Activated CD4-positive, alpha-beta T cell treated with anti-CD3 and anti-CD28 coated beads for 36 hours (primary cell): ENCODE measurements at regions of chrX and their contacts with region 1.

Region 1: DNA sequence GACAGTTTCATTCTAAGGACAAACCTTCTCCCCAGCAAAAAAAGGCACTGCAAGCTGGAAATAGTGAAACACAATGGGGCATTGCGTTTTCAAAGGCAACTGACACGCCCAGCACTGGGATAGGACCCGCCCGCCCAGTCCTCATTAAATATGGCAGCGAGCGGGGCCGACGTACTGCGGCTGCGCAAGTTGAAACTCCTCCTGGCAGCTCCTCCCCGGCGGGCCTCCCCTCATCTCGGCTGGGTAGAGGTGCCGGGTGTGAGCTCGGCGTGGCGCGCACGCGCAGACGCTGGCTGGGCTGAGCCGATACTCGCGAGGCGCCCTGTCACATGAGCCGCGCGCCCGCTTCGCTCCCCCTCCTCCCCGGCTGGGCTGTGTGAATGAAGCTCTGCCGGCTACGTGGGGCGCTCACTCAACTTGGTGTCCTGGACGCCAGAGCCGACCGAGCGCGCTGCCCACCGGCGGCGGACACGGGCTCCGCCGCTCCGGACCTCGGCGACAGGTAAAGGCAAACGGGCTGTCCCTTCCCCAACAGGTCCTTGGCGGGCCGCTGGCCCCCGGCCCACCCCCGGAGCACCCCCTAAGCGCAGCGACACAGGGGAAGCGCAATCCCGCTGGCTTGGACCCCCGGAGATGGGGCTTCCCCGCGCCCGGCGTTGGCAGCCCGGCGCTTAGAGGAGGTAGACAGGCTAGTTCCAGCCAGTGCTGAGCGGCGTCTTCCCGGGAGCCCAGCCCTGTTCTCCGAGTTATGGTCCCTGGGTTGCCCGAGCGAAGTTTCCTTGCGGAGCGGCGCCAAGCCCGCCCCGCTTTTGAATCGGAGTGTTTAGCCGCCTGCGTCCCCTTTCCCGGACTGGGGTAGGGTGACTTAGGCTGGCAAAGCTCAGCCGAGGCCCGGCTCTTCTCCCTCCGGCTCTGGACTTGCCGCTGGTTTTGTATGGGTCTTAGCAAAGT is at the start of gene CLCN5:
- DNase-seq: peak; percentile 96
- ATAC-seq: peak; percentile 96
- H3K4me3 Mint-ChIP-seq: peak within 1 kb of the TSS; percentile 71
- H3K27ac Mint-ChIP-seq: peak within 1 kb of the TSS; percentile 82
- H3K4me1 Mint-ChIP-seq: peaks cover 14% of the 10 kb centered on the region
- H3K27me3 Mint-ChIP-seq: no peaks in the 10 kb centered on the region
- total RNA-seq, gene CLCN5: 2.6 to 3.2 TPM

Region 2: GRCh38 chrX:49840679-49841078 is 81.9 kb before region 1 on chrX:
- CTCF ChIA-PET with region 1: interaction called, 3 read pairs
- POLR2A ChIA-PET with region 1: no interaction called
- intact Hi-C with region 1: loop called in 1 of 2 experiments (anchors 2 kb)
- DNase-seq: peak; percentile 77
- ATAC-seq: peak; percentile 81
- H3K4me3 Mint-ChIP-seq: no peak overlapping the region
- H3K27ac Mint-ChIP-seq: no peak overlapping the region
- H3K4me1 Mint-ChIP-seq: peaks cover 5% of the 10 kb centered on the region
- H3K27me3 Mint-ChIP-seq: no peaks in the 10 kb centered on the region

Region 3: DNA sequence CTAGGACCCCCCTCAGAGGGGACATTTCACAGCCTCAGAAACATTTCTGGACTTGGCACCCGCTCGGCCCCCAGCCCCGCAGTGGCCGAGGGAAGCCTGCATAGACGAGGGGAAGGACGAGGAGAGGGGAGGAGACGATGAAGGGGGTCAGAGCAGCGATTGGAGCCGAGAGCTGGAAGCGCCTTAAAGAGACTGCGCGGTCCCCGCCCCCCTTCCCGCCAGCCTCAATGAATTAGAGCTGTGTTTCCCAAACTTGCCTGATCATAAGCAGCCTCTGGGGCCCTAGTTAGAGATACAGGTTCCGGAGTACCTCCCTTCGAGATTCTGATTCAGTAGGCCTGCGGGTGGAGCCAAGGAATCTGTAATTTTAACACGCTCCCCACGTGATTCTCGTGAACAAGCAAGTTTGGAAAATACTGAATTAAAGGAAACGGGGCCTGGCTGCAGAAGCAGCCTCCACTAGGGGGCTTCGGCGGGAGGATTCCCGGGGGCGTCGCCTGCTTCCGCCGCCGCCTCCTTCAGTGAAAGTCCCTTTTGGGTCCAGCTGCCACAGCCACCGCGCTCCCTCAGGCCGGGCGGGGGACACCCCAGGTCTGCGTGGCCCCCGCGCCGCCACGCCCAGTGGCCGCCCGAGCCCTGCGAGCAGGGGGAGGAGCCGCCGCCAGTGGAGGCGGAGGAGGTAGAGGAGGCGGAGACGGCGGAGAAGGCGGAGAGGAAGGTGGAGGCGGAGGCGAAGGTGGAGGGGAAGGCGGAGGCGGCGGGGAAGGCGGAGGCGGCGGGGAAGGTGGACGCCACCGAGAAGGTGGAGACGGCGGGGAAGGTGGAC is 43.5 kb before region 1 on chrX and contains the start of gene USP27X:
- CTCF ChIA-PET with region 1: interaction called, 12 read pairs
- POLR2A ChIA-PET with region 1: interaction called, 3 read pairs
- intact Hi-C with region 1: loop called (anchors 1 kb)
- DNase-seq: peak; percentile 79
- ATAC-seq: peak; percentile 83
- H3K4me3 Mint-ChIP-seq: peak within 1 kb of the TSS; percentile 74
- H3K27ac Mint-ChIP-seq: peak within 1 kb of the TSS; percentile 76
- H3K4me1 Mint-ChIP-seq: peaks cover 28% of the 10 kb centered on the region
- H3K27me3 Mint-ChIP-seq: no peaks in the 10 kb centered on the region
- total RNA-seq, gene USP27X: 2.2 TPM

Region 4: GRCh38 chrX:49884290-49884862 is 38.2 kb before region 1 on chrX:
- CTCF ChIA-PET with region 1: interaction called, 12 read pairs
- POLR2A ChIA-PET with region 1: no interaction called
- intact Hi-C with region 1: loop called (anchors 1 kb)
- DNase-seq: peak; percentile 73
- ATAC-seq: peak; percentile 61
- H3K4me3 Mint-ChIP-seq: no peak overlapping the region
- H3K27ac Mint-ChIP-seq: no peak overlapping the region
- H3K4me1 Mint-ChIP-seq: peaks cover 20% of the 10 kb centered on the region
- H3K27me3 Mint-ChIP-seq: no peaks in the 10 kb centered on the region

Region 5: GRCh38 chrX:49977319-49978090 is 54.9 kb after region 1 on chrX:
- CTCF ChIA-PET with region 1: no interaction called
- POLR2A ChIA-PET with region 1: no interaction called
- intact Hi-C with region 1: no loop called
- DNase-seq: no peak
- ATAC-seq: no peak
- H3K4me3 Mint-ChIP-seq: no peak overlapping the region
- H3K27ac Mint-ChIP-seq: no peak overlapping the region
- H3K4me1 Mint-ChIP-seq: no peaks in the 10 kb centered on the region
- H3K27me3 Mint-ChIP-seq: no peaks in the 10 kb centered on the region

Region 6: GRCh38 chrX:50204364-50204899 is 281.9 kb after region 1 on chrX and contains the start of gene CCNB3:
- CTCF ChIA-PET with region 1: interaction called, 3 read pairs
- POLR2A ChIA-PET with region 1: no interaction called
- intact Hi-C with region 1: loop called (anchors 1 to 2 kb)
- DNase-seq: peak; percentile 81
- ATAC-seq: peak; percentile 98
- H3K4me3 Mint-ChIP-seq: peak within 1 kb of the TSS; percentile 73
- H3K27ac Mint-ChIP-seq: peak within 1 kb of the TSS; percentile 90
- H3K4me1 Mint-ChIP-seq: peaks cover 9% of the 10 kb centered on the region
- H3K27me3 Mint-ChIP-seq: no peaks in the 10 kb centered on the region
- total RNA-seq, gene CCNB3: 0.25 to 0.43 TPM

Region 7: DNA sequence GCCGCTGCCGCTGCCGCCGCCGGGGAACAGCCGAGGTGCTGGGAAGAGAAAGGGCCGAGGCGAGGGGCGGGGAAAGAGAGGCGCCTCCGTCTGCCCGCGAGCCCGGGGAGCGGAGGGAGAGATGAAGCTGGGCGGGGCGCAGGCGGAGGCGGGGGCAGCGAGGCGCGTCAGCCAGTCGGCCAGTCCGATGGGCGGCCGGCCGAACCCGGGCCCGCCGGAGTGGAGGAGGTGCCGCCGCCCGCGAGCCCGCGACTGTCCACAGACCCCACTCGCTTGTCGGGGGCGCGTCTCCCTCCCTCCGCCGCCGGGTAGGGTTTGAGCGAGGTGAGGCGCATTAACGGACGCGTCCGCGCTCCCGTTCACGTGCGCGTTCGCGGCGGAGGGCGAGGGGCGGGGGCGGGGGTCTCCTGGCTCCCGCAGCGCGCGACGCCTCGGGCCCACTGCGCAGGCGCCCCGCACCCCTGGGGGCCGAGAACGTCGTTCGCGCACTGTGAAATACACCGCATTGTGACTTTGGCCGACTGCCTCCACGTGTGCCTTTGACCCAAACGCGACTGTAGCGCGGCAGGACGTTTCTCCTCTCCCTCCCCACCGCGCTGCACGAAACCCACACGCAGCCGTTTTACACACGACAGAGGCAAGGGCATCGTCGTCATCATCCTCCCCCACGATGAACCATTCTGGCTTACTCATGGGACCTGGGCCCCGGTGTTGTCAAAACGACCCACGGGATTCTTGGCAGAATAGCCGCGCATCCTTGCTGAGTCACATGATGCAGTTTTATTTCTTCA is 1574.1 kb after region 1 on chrX and contains the start of gene NUDT11:
- CTCF ChIA-PET with region 1: no interaction called
- POLR2A ChIA-PET with region 1: no interaction called
- intact Hi-C with region 1: loop called in 1 of 2 experiments (anchors 5 kb)
- DNase-seq: peak; percentile 72
- ATAC-seq: peak; percentile 76
- H3K4me3 Mint-ChIP-seq: peak within 1 kb of the TSS; percentile 73
- H3K27ac Mint-ChIP-seq: peak within 1 kb of the TSS; percentile 70
- H3K4me1 Mint-ChIP-seq: peaks cover 9% of the 10 kb centered on the region
- H3K27me3 Mint-ChIP-seq: peaks cover 26% of the 10 kb centered on the region
- total RNA-seq, gene NUDT11: 1.9 to 2.4 TPM